ENCODE measurements at regions of chr1 and their contacts with region 1.

Region 1: DNA sequence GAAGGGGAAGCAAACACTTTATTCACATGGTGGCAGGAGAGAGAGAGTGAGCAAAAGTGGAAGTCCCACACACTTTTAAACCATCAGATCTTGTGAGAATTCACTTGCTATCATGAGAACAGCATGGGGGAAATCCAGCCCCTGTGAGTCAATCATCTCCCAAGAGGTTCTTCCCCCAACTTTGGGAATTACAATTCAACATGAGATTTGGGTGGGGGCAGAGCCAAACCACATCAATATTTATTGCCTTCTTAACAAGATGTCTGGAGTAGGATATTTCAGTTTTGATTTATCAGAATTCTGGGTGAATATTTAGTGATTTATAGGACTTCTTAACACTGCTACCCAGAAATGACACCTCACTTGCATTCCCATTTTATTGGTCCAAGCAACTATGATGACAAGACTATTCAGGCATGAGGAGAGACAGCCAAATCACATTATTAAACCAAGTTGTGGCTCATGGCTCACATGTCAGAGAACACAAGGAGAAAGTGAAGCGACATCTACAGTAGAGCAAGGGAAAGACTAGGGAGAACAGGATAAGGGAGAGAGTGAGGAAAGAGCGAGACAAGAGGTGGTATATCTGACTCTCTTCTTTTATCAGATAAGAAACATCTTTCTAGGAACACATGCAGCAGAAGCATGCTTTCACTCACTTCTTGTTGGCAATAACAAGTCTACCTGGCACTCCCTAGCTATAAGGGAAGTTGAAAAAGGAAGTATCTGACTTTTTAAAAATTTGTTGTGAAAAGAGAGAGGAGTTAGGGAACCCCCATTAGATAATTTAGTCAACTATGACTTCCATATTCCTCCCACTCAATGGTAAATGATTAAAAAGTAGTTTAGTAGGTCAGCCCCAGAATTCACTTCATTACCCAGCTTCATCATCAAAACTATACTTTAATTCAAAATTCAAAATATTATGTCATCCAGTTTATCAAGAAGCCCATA is 36.6 kb upstream of the PTPRC start:
- DNase-seq: peak; percentile 72
- H3K4me3 Mint-ChIP-seq: peak overlapping the region; percentile 33
- H3K27ac Mint-ChIP-seq: peak overlapping the region; percentile 77
- H3K4me1 Mint-ChIP-seq: peaks cover 79% of the 10 kb centered on the region
- H3K27me3 Mint-ChIP-seq: no peaks in the 10 kb centered on the region

Region 2: GRCh38 chr1:198359024-198359653 is 243.1 kb before region 1 on chr1:
- CTCF ChIA-PET with region 1: no interaction called
- POLR2A ChIA-PET with region 1: no interaction called
- intact Hi-C with region 1: loop called (anchors 10 kb)
- DNase-seq: no peak
- H3K4me3 Mint-ChIP-seq: no peak overlapping the region
- H3K27ac Mint-ChIP-seq: no peak overlapping the region
- H3K4me1 Mint-ChIP-seq: peaks cover 8% of the 10 kb centered on the region
- H3K27me3 Mint-ChIP-seq: no peaks in the 10 kb centered on the region

Region 3: DNA sequence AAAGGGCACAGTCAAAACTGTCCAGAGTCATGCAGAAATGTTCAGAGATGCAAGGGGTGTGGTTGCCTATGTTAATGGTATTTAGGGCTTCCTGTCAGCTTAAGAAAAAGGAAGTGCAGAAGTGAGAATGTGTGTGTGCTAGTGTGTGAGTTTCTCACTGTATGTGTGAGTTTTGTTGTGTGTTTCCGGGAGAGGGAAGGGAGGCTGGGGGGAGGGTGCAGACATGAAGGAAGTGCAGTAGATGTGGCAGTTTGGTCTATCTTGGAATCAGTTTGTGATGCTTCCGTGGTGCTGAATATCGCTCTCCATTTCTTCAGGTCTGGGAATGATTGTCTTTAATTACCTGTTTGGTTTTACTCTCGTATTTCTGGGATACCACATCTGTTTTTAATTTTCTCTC is 45.2 kb before region 1 on chr1:
- CTCF ChIA-PET with region 1: interaction called, 3 read pairs
- POLR2A ChIA-PET with region 1: no interaction called
- intact Hi-C with region 1: loop called (anchors 1 kb)
- DNase-seq: peak; percentile 74
- H3K4me3 Mint-ChIP-seq: peak overlapping the region; percentile 69
- H3K27ac Mint-ChIP-seq: peak overlapping the region; percentile 49
- H3K4me1 Mint-ChIP-seq: peaks cover 78% of the 10 kb centered on the region
- H3K27me3 Mint-ChIP-seq: no peaks in the 10 kb centered on the region

Region 4: DNA sequence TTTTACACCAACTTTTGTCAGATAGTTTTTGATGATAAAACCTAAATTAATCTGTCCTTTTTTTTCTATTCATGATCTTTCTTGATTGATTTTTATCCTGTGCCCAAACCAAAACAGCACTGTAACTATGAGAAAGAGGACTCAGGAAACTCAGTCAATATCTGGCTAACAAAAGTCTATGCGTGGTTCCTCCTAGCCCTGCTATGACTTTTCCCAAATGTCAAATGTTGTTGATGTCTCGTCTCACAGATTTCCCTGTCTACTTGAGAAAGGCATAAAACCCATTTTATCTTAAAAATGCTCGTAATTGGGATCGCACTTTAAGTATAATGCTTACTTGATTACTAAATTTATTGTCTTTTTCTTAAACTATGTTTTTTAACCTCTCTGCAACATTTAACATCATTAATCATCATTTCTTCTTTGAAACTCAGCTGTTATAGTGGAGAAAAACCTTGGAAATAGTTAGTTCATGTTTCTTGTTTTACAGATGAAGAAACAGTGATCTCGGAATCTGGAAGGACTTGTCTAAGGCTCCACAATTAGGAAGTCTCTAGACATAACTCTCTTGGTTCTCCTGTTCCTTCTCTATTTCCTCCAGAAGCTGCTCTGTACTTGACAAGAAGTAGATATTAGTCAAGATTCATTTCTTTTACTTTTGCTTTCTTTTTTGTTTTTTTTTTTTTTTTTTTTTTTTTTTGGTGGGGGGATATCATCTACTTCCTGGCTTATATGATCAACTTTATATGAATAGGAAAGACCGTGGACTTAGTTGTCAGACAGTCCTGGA is 10.5 kb after region 1 on chr1:
- CTCF ChIA-PET with region 1: interaction called, 3 read pairs
- POLR2A ChIA-PET with region 1: interaction called, 3 read pairs
- intact Hi-C with region 1: loop called (anchors 1 kb)
- DNase-seq: no peak
- H3K4me3 Mint-ChIP-seq: peak overlapping the region; percentile 79
- H3K27ac Mint-ChIP-seq: peak overlapping the region; percentile 97
- H3K4me1 Mint-ChIP-seq: peaks cover 71% of the 10 kb centered on the region
- H3K27me3 Mint-ChIP-seq: no peaks in the 10 kb centered on the region

Region 5: DNA sequence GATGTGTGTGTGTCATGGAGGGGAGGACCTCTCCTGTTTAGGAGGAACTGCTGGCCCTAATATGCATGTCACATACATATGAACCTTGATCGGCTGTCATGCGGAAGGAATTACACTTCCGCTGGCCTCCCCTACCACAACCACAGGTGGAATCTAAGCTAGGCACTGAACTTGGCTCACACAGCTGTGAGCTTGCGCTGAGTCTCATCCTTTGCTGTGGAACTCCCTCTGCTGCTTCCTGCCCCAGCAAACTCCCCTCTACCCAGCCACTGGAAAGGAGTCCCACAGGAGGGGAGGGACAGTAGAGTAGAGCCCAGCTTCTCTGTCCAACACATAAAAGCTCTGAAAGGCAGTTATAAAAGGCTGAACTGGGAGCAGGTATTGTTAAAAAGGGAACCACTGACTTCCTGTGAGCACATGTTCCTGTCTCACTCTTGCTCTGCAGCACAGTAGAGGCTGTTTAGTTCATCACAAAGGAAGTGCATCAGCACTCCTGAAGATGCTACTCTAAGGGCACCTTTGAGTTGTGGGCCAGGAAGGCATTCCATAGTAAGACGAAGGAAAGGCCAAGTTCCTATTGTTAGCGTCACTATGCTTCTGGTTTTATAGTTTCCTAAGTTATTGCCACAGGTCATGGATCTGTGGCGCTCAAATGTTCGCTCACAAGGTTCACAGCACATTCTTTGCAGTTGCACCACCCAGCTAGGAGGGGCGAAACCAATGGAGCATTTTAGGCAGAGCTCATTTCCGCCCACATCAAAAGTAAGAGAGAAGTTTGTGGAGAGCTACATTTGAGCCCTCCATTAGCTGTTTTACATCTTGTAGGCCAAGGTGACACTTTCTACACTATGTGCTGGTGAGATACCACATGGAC is 19.0 kb after region 1 on chr1:
- CTCF ChIA-PET with region 1: interaction called, 3 read pairs
- POLR2A ChIA-PET with region 1: interaction called, 4 read pairs
- intact Hi-C with region 1: loop called (anchors 1 kb)
- DNase-seq: peak; percentile 84
- H3K4me3 Mint-ChIP-seq: peak overlapping the region; percentile 74
- H3K27ac Mint-ChIP-seq: peak overlapping the region; percentile 94
- H3K4me1 Mint-ChIP-seq: peaks cover 87% of the 10 kb centered on the region
- H3K27me3 Mint-ChIP-seq: no peaks in the 10 kb centered on the region